Upper lobe of right lung (tissue), 1 donor: ENCODE measurements at regions of chr4 and their contacts with region 1.

Region 1: DNA sequence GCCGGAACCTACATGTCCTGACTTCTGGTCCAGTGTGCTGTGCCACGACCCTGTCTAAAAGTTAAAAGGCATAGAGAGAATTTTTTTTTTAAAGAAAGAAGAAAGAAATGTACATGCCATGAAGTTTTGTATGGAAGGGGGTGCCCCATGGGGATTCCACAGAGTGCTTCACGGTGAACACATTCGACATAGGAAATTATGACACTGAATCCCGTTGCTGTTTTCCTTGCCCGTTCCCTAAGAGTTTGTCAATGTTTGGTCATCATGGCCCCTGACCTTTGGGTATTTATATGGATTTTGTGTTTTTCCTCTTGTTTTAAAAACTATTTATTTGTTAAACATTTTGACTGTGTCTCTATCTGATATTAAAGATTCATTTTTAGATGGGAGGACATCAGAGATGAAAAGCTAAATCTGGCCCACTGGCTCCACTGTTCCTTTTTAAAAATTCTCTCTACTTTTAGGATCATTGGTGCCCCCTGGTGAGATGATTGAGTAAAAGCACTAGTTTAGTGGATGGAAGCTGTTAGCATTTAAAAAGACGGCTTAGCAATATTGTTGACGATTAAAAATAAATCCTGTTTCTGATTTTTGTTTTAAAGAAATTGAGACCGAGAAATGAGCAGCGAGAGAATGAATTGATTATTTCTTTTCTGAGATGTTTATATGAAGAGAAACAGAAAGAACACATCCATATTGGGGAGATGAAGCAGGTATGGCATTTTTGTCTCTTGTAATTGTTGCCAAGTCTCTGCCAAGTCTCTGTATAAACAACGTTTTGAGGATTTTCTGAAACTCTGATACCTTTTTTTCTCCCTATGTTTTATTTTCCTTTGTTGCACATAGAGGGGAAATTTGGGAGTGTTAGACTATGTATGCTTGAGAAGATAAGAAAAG is 75.0 kb downstream of the PTTG2 start:
- DNase-seq: no peak
- ATAC-seq: peak; percentile 72
- H3K4me3 ChIP-seq: no peak overlapping the region
- H3K27ac ChIP-seq: no peak overlapping the region
- H3K4me1 ChIP-seq: no peaks in the 10 kb centered on the region
- H3K27me3 ChIP-seq: no peaks in the 10 kb centered on the region
- CTCF ChIP-seq: peak; percentile 76

Region 2: DNA sequence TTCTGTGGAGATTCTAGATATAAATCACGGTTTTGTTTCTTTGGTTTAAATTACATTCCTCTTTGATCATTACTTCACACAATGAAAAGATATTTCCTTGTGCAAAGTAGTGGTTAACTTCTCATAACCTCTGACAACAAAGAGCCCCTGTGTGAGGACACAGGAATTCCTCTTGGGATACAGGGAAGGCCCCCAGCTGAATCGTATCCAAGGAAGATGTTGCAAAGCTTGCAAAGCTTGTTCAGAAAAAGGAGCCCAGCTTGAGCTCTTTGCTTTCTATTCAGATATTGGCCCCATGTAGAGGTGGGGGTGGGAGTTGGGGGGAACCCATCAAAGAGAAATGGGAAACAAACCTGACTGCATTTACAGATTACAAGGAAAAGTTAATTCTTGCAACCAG is 494.7 kb before region 1 on chr4:
- intact Hi-C with region 1: no loop called
- DNase-seq: no peak
- ATAC-seq: no peak
- H3K4me3 ChIP-seq: no peak overlapping the region
- H3K27ac ChIP-seq: no peak overlapping the region
- H3K4me1 ChIP-seq: no peaks in the 10 kb centered on the region
- H3K27me3 ChIP-seq: no peaks in the 10 kb centered on the region
- CTCF ChIP-seq: no peak

Region 3: DNA sequence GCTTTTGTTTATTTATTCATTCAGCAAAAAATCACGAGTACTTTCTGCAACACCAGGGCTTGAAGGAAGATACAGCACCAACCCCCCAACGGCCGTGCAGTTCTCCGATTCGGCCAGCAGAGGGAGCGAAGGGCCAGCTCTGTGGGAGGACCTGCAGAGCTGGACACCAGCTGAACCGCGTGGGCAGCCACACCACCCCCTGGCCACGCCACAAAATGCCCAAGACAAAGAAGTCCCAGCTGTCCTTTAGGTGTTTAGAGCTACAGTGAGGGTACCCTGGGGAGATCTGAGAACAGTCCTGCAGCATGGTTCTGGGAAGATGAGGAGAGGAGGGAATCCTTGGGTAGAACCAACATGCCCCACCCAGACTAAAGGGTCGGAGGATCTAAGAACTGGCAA is 432.2 kb before region 1 on chr4:
- intact Hi-C with region 1: loop called (anchors 10 kb)
- DNase-seq: peak; percentile 91
- ATAC-seq: peak; percentile 97
- H3K4me3 ChIP-seq: no peak overlapping the region
- H3K27ac ChIP-seq: no peak overlapping the region
- H3K4me1 ChIP-seq: peaks cover 4% of the 10 kb centered on the region
- H3K27me3 ChIP-seq: no peaks in the 10 kb centered on the region
- CTCF ChIP-seq: peak; percentile 98

Region 4: GRCh38 chr4:37802068-37802666 is 233.1 kb before region 1 on chr4:
- intact Hi-C with region 1: loop called (anchors 5 kb)
- DNase-seq: peak; percentile 67
- ATAC-seq: peak; percentile 95
- H3K4me3 ChIP-seq: no peak overlapping the region
- H3K27ac ChIP-seq: no peak overlapping the region
- H3K4me1 ChIP-seq: no peaks in the 10 kb centered on the region
- H3K27me3 ChIP-seq: no peaks in the 10 kb centered on the region
- CTCF ChIP-seq: peak; percentile 65